Naive thymus-derived CD4-positive, alpha-beta T cell (primary cell): ENCODE measurements at regions of chr1 and their contacts with region 1.

Region 1: GRCh38 chr1:121418369-121419049 is 233.7 kb downstream of the SRGAP2C start:
- DNase-seq: no peak
- ATAC-seq: no peak
- H3K4me3 ChIP-seq: no peak overlapping the region
- H3K4me3 Mint-ChIP-seq: no peak overlapping the region
- H3K27ac ChIP-seq: no peak overlapping the region
- H3K27ac Mint-ChIP-seq: peak overlapping the region in 1 of 9 donors; percentile 14
- H3K4me1 ChIP-seq: no peaks in the 10 kb centered on the region
- H3K4me1 Mint-ChIP-seq: peaks cover 0 to 14% (median 3%) of the 10 kb centered on the region in 7 donors
- H3K27me3 ChIP-seq: no peaks in the 10 kb centered on the region
- H3K27me3 Mint-ChIP-seq: peaks cover 9 to 17% (median 11%) of the 10 kb centered on the region in 5 donors

Region 2: GRCh38 chr1:121443001-121443540 is 24.6 kb after region 1 on chr1:
- CTCF ChIA-PET with region 1: interaction called, 3 read pairs
- POLR2A ChIA-PET with region 1: no interaction called
- intact Hi-C with region 1: loop called in 1 of 2 experiments (anchors 1 kb)
- DNase-seq: no peak
- ATAC-seq: no peak
- H3K4me3 ChIP-seq: no peak overlapping the region
- H3K4me3 Mint-ChIP-seq: no peak overlapping the region
- H3K27ac ChIP-seq: no peak overlapping the region
- H3K27ac Mint-ChIP-seq: no peak overlapping the region
- H3K4me1 ChIP-seq: no peaks in the 10 kb centered on the region
- H3K4me1 Mint-ChIP-seq: peaks cover 0 to 17% (median 2%) of the 10 kb centered on the region in 7 donors
- H3K27me3 ChIP-seq: no peaks in the 10 kb centered on the region
- H3K27me3 Mint-ChIP-seq: peaks cover 0 to 4% (median 0%) of the 10 kb centered on the region in 5 donors

Region 3: DNA sequence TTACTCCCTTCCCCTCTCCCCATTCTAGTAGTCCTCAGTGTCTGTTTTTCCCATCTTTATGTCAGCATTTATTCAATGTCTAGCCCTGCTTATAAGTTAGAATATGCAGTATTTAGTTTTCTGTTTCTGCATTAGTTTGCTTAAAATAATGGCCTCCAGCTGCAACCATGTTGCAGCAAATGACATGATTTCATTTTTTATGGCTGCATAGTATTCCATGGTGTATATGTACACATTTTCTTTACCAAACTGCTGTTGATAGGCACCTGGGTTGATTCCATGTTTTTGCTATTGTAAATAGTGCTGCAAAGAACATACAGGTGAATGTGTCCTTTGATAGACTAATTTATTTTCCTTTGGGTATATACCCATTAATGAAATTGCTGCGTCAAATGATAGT is 34.0 kb after region 1 on chr1:
- CTCF ChIA-PET with region 1: no interaction called
- POLR2A ChIA-PET with region 1: no interaction called
- intact Hi-C with region 1: loop called in 1 of 2 experiments (anchors 5 kb)
- DNase-seq: no peak
- ATAC-seq: no peak
- H3K4me3 ChIP-seq: no peak overlapping the region
- H3K4me3 Mint-ChIP-seq: no peak overlapping the region
- H3K27ac ChIP-seq: no peak overlapping the region
- H3K27ac Mint-ChIP-seq: no peak overlapping the region
- H3K4me1 ChIP-seq: no peaks in the 10 kb centered on the region
- H3K4me1 Mint-ChIP-seq: peaks cover 0 to 33% (median 0%) of the 10 kb centered on the region in 7 donors
- H3K27me3 ChIP-seq: no peaks in the 10 kb centered on the region
- H3K27me3 Mint-ChIP-seq: peaks cover 0 to 15% (median 0%) of the 10 kb centered on the region in 5 donors